Left ventricle myocardium superior (tissue), 1 donor: ENCODE measurements at regions of chr11 and their contacts with region 1.

Region 1: GRCh38 chr11:12087075-12088004 is 23.1 kb upstream of the MICAL2 start:
- DNase-seq: peak; percentile 47
- ATAC-seq: peak; percentile 13

Region 2: GRCh38 chr11:12043959-12044819 is 43.2 kb before region 1 on chr11:
- intact Hi-C with region 1: no loop called
- DNase-seq: peak; percentile 86
- ATAC-seq: peak; percentile 86

Region 3: DNA sequence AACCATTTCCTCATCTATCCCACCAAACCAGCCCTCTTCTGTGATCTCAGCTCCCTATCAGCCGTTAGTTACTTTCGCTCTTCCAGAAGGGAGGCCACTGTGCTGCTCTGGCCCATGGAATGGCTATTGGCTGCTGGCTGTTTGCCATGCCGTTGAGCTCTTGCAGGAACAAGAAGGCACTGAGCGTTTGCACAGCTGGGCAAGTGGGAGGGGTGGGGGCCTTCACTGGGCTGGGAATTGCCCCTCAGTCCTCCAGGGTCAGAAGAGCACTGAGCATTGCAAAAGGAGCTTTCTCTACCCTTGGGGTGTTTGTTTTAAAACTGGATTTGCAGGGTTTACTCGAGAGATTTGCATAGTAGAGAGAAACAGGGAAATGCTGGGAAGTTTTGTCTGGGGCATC is 161.0 kb after region 1 on chr11:
- intact Hi-C with region 1: loop called (anchors 10 kb)
- DNase-seq: peak; percentile 88
- ATAC-seq: peak; percentile 71